GM13976 (cell line): ENCODE measurements at regions of chr4 and their contacts with region 1.

Region 1: DNA sequence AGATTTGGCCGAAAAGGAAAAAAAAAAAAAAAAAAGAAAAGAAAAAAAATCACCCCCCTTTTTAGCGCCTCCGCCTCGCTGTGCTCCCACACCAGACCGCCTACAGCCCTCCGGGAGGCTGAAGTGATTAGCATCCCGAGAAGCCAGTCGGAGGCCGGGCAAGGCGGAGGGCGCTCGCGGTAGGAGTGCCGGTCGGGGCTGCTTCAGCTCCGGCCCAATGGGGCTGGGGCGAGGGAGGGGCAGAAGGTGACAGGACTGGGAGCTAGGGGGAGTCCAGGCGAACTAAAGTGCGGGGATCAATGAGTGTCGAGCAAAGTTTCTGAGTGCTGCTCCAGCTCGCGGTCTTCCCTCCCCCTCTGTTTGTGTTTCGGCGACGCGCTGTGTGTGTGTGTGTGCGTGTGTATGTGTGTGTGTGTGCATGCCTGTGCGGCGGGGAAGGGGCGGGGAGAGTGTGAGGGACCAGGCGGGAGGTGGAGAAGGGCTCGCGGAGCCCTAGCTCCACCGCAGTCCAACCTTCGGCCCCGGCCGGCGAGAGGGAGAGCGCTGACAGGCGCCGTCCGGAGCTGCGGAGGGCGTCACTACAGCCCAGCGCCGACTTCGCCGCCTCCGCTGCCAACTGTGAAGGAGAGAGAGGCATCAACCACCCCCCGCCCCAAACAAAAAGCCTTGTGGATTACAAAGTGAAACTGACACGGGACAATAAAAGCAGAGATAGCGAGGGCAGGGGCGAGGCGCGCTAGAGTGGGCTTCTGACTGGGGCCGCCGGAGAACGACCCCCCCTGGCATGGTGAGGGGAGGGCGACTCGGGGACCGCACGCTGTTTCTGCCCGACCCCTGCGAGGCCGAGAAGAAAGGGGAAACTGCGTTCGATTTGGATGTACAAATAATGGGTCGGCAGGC is at the start of gene FAT4:
- DNase-seq: peak; percentile 75
- CTCF ChIP-seq: no peak

Region 2: DNA sequence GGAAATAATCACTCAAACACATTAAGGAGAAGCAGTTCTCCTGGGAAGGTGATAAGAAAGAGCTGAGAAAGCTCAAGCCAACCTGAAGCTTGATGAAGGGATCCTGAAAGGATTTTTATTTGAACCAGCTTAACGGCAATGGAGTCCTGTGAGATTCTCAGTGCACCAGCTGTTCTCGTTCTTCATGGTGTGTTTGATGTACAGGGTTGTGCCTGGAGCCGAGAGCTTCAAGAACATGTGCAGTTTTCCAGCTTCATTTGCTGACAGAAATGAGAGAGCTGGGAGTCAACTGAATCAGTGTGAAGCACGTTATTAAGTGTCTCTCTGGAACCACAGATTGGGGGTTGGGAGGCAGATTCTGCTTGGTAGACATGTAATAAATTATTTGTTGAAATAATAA is 718.1 kb before region 1 on chr4:
- in situ Hi-C with region 1: no loop called
- DNase-seq: no peak
- CTCF ChIP-seq: no peak

Region 3: DNA sequence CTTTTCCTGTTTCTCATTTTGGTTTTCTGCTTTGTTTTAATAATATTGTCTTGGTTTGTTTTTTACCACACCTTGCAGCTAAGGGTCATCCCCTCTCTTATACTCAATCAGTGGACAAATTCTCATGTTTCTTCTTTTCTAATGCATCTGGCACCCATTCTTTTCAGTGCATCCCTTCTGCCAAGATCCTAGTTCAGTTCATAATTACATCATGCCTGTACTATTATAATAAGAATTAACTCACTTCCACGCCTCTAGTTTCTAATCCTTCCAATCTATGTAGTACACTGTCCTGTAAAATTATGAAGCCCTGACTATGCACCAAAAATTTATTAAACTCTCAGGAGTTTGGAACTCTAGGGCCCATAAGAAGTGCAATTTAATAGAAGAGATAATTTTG is 125.9 kb after region 1 on chr4:
- in situ Hi-C with region 1: no loop called
- DNase-seq: no peak
- CTCF ChIP-seq: no peak

Region 4: GRCh38 chr4:126405369-126405982 is 1090.5 kb after region 1 on chr4:
- in situ Hi-C with region 1: loop called (anchors 25 kb)
- DNase-seq: no peak
- CTCF ChIP-seq: peak; percentile 53